ENCODE measurements at regions of chr13 and their contacts with region 1.

Region 1: GRCh38 chr13:110915057-110915873 is at the start of gene ANKRD10:
- DNase-seq: peak; percentile 100
- H3K4me3 ChIP-seq: peak within 1 kb of the TSS; percentile 95
- H3K4me3 Mint-ChIP-seq: peak within 1 kb of the TSS; percentile 71
- H3K27ac Mint-ChIP-seq: peak within 1 kb of the TSS; percentile 79
- H3K4me1 ChIP-seq: peaks cover 23% of the 10 kb centered on the region; the same call in 1 of the 2 replicates
- H3K4me1 Mint-ChIP-seq: peaks cover 7% of the 10 kb centered on the region
- H3K27me3 ChIP-seq: no peaks in the 10 kb centered on the region
- H3K27me3 Mint-ChIP-seq: no peaks in the 10 kb centered on the region
- CTCF ChIP-seq: peak; percentile 78 to 80
- total RNA-seq, gene ANKRD10: 123 and 132 TPM in 2 replicates

Region 2: DNA sequence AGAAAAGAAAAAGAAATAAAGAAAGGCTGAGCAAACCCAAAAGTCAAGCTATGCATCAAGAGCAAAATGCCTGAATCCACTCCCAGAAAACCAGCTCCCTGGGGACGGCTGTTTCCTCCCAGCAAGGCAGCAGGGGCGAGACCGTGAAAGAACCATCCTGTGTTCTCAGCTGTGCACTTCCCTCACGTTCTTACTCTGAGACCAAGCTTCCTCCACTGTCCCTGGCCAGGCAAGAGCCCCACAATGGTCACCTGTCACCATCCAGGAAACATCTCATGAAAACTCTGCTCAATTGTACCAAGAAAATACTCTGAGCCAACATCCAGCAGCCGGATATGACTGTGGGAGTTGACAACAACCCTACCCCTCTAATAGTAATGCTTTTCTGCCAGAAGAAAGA is 376.6 kb before region 1 on chr13:
- CTCF ChIA-PET with region 1: no interaction called
- POLR2A ChIA-PET with region 1: interaction called, 12 read pairs
- intact Hi-C with region 1: no loop called
- DNase-seq: no peak
- H3K4me3 ChIP-seq: no peak overlapping the region
- H3K4me3 Mint-ChIP-seq: no peak overlapping the region
- H3K27ac Mint-ChIP-seq: no peak overlapping the region
- H3K4me1 ChIP-seq: peaks cover 17% of the 10 kb centered on the region
- H3K4me1 Mint-ChIP-seq: peaks cover 28% of the 10 kb centered on the region
- H3K27me3 ChIP-seq: no peaks in the 10 kb centered on the region
- H3K27me3 Mint-ChIP-seq: no peaks in the 10 kb centered on the region
- CTCF ChIP-seq: no peak

Region 3: DNA sequence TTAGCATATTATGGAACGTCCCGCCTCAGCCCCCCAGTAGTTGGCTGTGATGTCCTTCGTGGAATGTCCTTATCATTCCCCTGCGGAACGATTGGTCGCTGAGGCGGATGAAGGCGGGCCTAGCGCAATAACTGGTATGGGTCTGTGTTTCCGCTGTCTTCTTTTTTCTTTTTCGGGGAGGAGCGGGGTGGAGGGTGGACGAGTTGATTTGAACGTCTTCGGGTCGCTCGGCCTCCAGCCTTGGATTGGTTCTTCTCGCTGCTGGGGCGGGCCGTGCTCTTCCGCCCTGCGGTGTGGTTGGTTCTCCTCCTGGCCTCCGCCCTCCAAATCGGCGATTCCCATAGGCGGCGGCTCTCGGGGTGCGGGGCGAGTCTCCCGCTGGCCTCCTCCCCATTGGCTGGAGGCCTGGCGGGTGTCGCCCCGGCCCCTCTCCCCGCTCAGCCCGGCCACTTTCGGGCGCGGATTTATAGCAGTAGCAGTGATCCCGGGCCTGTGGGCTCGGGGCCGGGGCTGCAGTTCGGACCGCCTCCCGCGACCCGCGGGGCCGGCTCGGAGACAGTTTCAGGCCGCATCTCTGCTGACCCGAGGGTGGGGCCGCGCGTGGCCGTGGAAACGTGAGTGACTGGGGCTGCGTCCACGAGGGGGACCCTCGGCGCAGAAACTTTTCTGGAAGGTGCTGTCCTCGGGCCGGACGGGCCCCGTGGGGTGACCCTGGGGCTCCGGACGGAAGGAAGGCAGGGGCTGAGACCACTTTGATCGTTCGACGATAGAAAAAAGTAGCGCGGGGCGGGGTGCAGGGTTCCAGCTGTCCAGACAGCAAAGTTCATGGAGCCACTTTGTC is 199.7 kb before region 1 on chr13:
- CTCF ChIA-PET with region 1: interaction called, 7 read pairs
- POLR2A ChIA-PET with region 1: interaction called, 8 read pairs
- intact Hi-C with region 1: loop called (anchors 2 kb)
- DNase-seq: peak; percentile 98 to 100
- H3K4me3 ChIP-seq: peak overlapping the region; percentile 93
- H3K4me3 Mint-ChIP-seq: peak overlapping the region; percentile 100
- H3K27ac Mint-ChIP-seq: peak overlapping the region; percentile 96
- H3K4me1 ChIP-seq: peaks cover 16% of the 10 kb centered on the region; the same call in 1 of the 2 replicates
- H3K4me1 Mint-ChIP-seq: peaks cover 17% of the 10 kb centered on the region
- H3K27me3 ChIP-seq: no peaks in the 10 kb centered on the region
- H3K27me3 Mint-ChIP-seq: peaks cover 2% of the 10 kb centered on the region
- CTCF ChIP-seq: peak in 1 of 2 experiments; percentile 18

Region 4: DNA sequence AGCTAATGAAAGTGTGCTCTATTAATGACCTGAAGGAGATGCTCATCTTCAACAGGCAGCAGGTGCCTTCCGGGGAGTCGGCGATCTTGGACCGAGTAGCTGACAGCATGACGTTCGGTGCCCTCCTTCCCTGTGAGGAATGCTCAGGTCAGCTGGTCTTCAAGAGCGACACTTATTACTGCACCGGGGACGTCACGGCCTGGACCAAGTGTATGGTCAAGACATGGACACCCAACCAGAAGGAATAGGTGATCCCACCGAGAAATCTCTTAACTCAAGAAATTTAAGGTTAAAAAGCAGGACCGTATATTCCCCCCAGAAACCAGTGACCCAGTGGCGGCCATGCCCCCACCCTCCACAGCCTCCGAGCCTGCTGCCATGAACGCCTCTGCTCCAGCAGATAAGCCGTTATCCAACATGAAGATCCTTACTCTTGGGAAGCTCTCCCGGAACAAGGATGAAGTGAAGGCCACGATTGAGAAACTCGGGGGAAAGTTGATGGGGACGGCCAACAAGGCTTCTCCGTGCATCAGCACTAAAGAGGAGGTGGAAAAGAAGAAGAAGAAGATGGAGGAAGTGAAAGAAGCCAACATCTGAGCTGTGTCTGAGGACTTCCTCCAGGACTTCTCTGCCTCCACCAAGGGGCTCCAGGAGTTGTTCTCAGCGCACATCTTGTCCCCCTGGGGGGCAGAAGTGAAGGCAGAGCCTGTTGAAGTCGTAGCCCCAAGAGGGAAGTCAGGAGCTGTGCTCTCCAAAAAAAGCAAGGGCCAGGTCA is 22.4 kb after region 1 on chr13:
- CTCF ChIA-PET with region 1: no interaction called
- POLR2A ChIA-PET with region 1: no interaction called
- intact Hi-C with region 1: no loop called
- DNase-seq: no peak
- H3K4me3 ChIP-seq: no peak overlapping the region
- H3K4me3 Mint-ChIP-seq: no peak overlapping the region
- H3K27ac Mint-ChIP-seq: no peak overlapping the region
- H3K4me1 ChIP-seq: no peaks in the 10 kb centered on the region
- H3K4me1 Mint-ChIP-seq: no peaks in the 10 kb centered on the region
- H3K27me3 ChIP-seq: peaks cover 1% of the 10 kb centered on the region; the same call in 1 of the 2 replicates
- H3K27me3 Mint-ChIP-seq: peaks cover 9% of the 10 kb centered on the region
- CTCF ChIP-seq: no peak

Region 5: GRCh38 chr13:111049802-111050538 is 134.7 kb after region 1 on chr13:
- CTCF ChIA-PET with region 1: interaction called, 6 read pairs
- POLR2A ChIA-PET with region 1: interaction called, 3 read pairs
- intact Hi-C with region 1: loop called (anchors 1 kb)
- DNase-seq: peak in 1 of 2 experiments; percentile 35
- H3K4me3 ChIP-seq: no peak overlapping the region
- H3K4me3 Mint-ChIP-seq: no peak overlapping the region
- H3K27ac Mint-ChIP-seq: no peak overlapping the region
- H3K4me1 ChIP-seq: no peaks in the 10 kb centered on the region
- H3K4me1 Mint-ChIP-seq: no peaks in the 10 kb centered on the region
- H3K27me3 ChIP-seq: no peaks in the 10 kb centered on the region; the same call in 1 of the 2 replicates
- H3K27me3 Mint-ChIP-seq: peaks cover 10% of the 10 kb centered on the region
- CTCF ChIP-seq: peak; percentile 53 to 56

Region 6: DNA sequence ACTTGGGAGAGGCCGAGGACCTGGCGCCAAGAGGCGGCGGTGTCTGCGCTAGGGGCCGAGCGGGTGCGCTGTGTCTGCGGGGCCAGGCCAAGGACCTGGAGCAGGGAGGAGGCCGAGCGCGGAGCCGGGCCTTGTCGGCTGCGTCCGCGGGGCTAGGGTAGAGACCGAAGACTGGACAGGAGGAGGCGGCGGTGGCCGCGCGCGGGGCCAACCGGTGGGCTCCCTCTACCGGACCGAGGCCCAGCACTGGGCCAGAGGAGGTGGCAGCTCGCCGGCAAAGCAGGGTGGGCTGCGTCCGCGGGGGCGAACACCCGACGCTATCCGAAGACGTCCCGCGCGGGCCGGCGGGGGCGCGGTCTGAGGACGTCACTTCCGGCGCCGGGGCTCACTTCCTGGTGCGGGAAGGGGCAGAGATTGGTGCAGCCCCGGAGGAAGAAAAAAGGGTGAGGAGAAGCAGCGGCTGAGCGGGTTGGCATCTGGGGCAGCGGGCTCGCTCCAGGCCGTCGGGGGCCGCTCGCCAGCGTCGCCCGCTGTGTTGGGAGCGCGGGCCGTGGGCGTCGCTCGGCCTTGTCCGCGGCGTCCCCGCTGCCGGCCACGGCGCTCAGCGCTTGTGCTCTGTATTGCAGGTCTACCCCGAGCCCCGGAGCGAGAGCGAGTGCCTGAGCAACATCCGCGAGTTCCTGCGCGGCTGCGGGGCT is 238.2 kb after region 1 on chr13:
- CTCF ChIA-PET with region 1: no interaction called
- POLR2A ChIA-PET with region 1: no interaction called
- intact Hi-C with region 1: loop called (anchors 2 kb)
- DNase-seq: peak; percentile 91 to 96
- H3K4me3 ChIP-seq: peak overlapping the region; percentile 81
- H3K4me3 Mint-ChIP-seq: peak overlapping the region; percentile 81
- H3K27ac Mint-ChIP-seq: peak overlapping the region; percentile 96
- H3K4me1 ChIP-seq: peaks cover 7% of the 10 kb centered on the region; the same call in 1 of the 2 replicates
- H3K4me1 Mint-ChIP-seq: peaks cover 13% of the 10 kb centered on the region
- H3K27me3 ChIP-seq: no peaks in the 10 kb centered on the region
- H3K27me3 Mint-ChIP-seq: no peaks in the 10 kb centered on the region
- CTCF ChIP-seq: no peak

Measured in Caco-2 (cell line).